ENCODE measurements at regions of chr11 and their contacts with region 1.

Region 1: DNA sequence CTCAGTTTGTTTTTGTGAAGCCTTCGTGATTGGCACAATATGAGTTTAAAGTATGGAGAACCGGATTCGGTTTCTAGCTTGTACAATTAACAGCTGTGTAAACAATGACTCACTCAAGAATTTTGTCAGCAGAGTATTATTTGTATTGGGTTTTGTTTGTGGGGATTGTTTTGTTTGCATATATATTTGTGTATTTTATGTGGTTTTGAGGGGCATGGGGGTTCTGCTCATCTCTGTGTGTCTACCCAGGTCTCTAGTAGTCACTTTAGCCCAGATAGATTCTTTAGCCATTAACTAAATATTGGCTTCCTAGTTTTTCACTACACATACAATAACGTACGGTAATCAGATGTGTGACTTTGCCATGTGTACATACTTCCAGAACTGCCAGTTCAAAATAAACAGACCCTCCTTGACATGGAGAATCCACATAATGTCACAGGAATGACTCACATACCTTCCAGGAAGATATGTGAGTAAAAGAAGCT is 7.5 kb upstream of the MS4A7 start:
- DNase-seq: no peak
- H3K4me3 Mint-ChIP-seq: peak overlapping the region; percentile 7
- H3K27ac Mint-ChIP-seq: peak overlapping the region; percentile 19
- H3K4me1 Mint-ChIP-seq: peaks cover 19% of the 10 kb centered on the region
- H3K27me3 Mint-ChIP-seq: no peaks in the 10 kb centered on the region
- CTCF ChIP-seq: no peak

Region 2: GRCh38 chr11:60469723-60470122 is 98.9 kb after region 1 on chr11:
- CTCF ChIA-PET with region 1: no interaction called
- intact Hi-C with region 1: loop called (anchors 5 kb)
- DNase-seq: no peak
- H3K4me3 Mint-ChIP-seq: no peak overlapping the region
- H3K27ac Mint-ChIP-seq: no peak overlapping the region
- H3K4me1 Mint-ChIP-seq: no peaks in the 10 kb centered on the region
- H3K27me3 Mint-ChIP-seq: no peaks in the 10 kb centered on the region
- CTCF ChIP-seq: no peak

Region 3: DNA sequence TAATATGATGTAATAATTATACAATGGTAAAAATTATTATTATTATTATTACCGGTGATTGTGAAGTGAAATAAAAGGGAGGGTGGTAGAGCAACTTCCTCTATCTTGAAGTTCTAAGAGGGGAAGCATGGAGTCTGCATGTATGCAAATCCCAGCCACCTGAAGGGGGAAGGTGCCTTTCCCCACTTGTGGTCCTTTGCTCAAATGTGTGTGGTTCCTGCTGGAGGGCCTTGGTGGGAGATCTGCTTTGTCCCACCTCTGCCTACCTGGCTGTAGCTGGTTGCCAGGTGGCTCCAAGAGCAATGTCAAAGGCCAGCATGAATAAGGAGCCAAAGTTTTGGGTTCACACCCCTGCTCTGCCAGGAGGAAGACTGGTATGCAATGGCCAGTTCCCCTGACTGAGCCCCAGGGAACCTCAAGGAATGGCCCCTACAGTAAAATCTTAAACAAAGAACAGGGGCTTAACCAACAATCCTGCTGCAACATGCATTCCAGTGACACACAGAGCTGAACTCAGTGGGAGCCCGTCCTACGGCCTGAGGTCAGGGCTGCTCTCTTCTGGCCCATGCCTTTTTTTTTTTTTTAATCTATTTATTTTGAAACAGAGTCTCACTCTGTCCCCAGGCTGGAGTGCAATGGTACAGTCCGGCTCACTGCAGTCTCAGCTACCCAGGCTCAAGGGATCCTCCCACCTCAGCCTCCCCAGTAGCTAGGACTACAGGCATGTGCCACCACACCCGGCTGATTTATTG is 561.9 kb after region 1 on chr11:
- CTCF ChIA-PET with region 1: no interaction called
- intact Hi-C with region 1: no loop called
- DNase-seq: no peak
- H3K4me3 Mint-ChIP-seq: no peak overlapping the region
- H3K27ac Mint-ChIP-seq: no peak overlapping the region
- H3K4me1 Mint-ChIP-seq: no peaks in the 10 kb centered on the region
- H3K27me3 Mint-ChIP-seq: no peaks in the 10 kb centered on the region
- CTCF ChIP-seq: no peak